Activated CD4-positive, alpha-beta memory T cell treated with anti-CD3 and anti-CD28 coated beads, Interleukin-2, amount 10 ng/mL, durations not matched to agents 7 days and 5 days (primary cell): ENCODE measurements at regions of chr15 and their contacts with region 1.

Region 1: DNA sequence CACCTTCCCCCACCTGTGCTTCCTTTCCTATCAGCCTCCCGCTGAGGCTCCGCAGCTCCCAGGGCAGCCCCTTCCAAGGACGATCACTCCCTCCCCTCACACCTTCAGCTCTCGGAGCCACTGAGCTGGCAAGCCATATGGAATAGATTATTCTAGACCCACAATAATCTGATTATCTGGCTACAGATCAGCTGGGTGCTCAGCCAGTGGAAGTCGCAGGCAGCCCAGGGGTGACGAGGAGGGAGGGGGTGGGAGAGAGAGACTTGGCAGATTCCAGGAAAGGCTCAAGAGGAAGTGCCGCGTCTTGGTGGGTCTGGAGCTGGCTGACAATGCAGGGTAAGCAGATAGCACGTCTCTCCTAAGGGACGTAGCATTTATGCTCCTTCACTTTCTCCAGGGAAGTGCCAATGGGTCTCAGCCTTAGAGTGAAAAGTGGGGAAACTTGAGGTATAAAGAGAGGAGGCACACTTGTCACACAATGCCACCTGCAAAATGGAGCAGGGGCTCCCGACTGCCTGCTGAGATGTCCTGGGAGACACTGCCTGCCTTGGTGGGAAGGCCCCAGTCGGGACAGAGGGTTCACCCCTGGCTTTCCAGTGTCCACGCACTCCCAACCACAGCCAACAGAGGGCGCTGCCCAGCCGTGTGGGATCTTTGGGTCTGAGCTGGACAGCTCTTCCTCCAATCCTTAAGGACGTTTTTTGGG is 9.4 kb upstream of the MESP1 start:
- DNase-seq: peak; percentile 77
- H3K4me3 Mint-ChIP-seq: no peak overlapping the region
- H3K27ac Mint-ChIP-seq: no peak overlapping the region
- H3K4me1 Mint-ChIP-seq: peaks cover 6% of the 10 kb centered on the region
- H3K27me3 Mint-ChIP-seq: peaks cover 8% of the 10 kb centered on the region

Region 2: GRCh38 chr15:89206908-89207331 is 553.5 kb before region 1 on chr15:
- CTCF ChIA-PET with region 1: no interaction called
- POLR2A ChIA-PET with region 1: no interaction called
- DNase-seq: peak; percentile 73
- H3K4me3 Mint-ChIP-seq: no peak overlapping the region
- H3K27ac Mint-ChIP-seq: no peak overlapping the region
- H3K4me1 Mint-ChIP-seq: peaks cover 37% of the 10 kb centered on the region
- H3K27me3 Mint-ChIP-seq: peaks cover 1% of the 10 kb centered on the region

Region 3: GRCh38 chr15:89740137-89740536 is 20.3 kb before region 1 on chr15:
- CTCF ChIA-PET with region 1: interaction called, 10 read pairs
- POLR2A ChIA-PET with region 1: no interaction called
- DNase-seq: peak; percentile 55
- H3K4me3 Mint-ChIP-seq: no peak overlapping the region
- H3K27ac Mint-ChIP-seq: no peak overlapping the region
- H3K4me1 Mint-ChIP-seq: peaks cover 1% of the 10 kb centered on the region
- H3K27me3 Mint-ChIP-seq: peaks cover 5% of the 10 kb centered on the region

Region 4: GRCh38 chr15:89776274-89777072 is 16.0 kb after region 1 on chr15 and contains the start of gene MESP2:
- CTCF ChIA-PET with region 1: interaction called, 22 read pairs
- POLR2A ChIA-PET with region 1: interaction called, 4 read pairs
- DNase-seq: peak; percentile 58
- H3K4me3 Mint-ChIP-seq: peak within 1 kb of the TSS; percentile 66
- H3K27ac Mint-ChIP-seq: no peak within 1 kb of the TSS
- H3K4me1 Mint-ChIP-seq: peaks cover 20% of the 10 kb centered on the region
- H3K27me3 Mint-ChIP-seq: peaks cover 5% of the 10 kb centered on the region
- total RNA-seq, gene MESP2: not detected

Region 5: GRCh38 chr15:89888214-89888804 is 127.9 kb after region 1 on chr15:
- CTCF ChIA-PET with region 1: interaction called, 55 read pairs
- POLR2A ChIA-PET with region 1: interaction called, 3 read pairs
- DNase-seq: no peak
- H3K4me3 Mint-ChIP-seq: no peak overlapping the region
- H3K27ac Mint-ChIP-seq: no peak overlapping the region
- H3K4me1 Mint-ChIP-seq: peaks cover 29% of the 10 kb centered on the region
- H3K27me3 Mint-ChIP-seq: no peaks in the 10 kb centered on the region

Region 6: DNA sequence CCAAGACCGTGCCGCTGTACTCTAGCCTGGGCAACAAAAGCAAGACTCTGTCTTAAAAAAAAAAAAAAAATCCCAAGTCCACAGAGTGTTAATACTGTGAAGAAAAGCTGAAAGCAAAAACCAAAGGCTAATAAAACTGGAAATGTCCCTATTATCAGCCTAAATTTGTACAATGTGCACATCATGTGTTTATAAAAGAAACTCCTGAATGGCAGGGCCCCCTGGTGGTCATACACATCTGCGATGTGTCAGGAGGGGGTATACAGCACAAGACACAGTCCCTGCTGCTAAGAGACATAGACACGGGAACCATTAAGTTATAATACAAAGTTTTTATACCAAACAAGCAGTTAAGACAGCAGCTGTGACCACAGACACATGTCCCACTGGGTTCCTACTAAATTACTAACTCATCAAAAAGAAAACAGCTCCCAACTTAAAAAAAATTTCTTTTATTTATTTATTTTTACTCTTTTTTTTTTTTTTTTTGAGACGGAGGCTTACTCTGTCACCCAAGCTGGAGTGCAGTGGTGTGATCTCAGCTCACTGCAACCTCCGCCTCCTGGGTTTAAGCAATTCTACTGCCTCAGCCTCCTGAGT is 310.9 kb after region 1 on chr15:
- CTCF ChIA-PET with region 1: interaction called, 14 read pairs
- POLR2A ChIA-PET with region 1: no interaction called
- DNase-seq: peak; percentile 83
- H3K4me3 Mint-ChIP-seq: no peak overlapping the region
- H3K27ac Mint-ChIP-seq: no peak overlapping the region
- H3K4me1 Mint-ChIP-seq: peaks cover 10% of the 10 kb centered on the region
- H3K27me3 Mint-ChIP-seq: no peaks in the 10 kb centered on the region

Region 7: GRCh38 chr15:90419738-90420406 is 659.4 kb after region 1 on chr15:
- CTCF ChIA-PET with region 1: no interaction called
- POLR2A ChIA-PET with region 1: no interaction called
- DNase-seq: peak; percentile 35
- H3K4me3 Mint-ChIP-seq: peak overlapping the region; percentile 26
- H3K27ac Mint-ChIP-seq: peak overlapping the region; percentile 82
- H3K4me1 Mint-ChIP-seq: peaks cover 64% of the 10 kb centered on the region
- H3K27me3 Mint-ChIP-seq: no peaks in the 10 kb centered on the region